ENCODE measurements at regions of chr9 and their contacts with region 1.

Region 1: DNA sequence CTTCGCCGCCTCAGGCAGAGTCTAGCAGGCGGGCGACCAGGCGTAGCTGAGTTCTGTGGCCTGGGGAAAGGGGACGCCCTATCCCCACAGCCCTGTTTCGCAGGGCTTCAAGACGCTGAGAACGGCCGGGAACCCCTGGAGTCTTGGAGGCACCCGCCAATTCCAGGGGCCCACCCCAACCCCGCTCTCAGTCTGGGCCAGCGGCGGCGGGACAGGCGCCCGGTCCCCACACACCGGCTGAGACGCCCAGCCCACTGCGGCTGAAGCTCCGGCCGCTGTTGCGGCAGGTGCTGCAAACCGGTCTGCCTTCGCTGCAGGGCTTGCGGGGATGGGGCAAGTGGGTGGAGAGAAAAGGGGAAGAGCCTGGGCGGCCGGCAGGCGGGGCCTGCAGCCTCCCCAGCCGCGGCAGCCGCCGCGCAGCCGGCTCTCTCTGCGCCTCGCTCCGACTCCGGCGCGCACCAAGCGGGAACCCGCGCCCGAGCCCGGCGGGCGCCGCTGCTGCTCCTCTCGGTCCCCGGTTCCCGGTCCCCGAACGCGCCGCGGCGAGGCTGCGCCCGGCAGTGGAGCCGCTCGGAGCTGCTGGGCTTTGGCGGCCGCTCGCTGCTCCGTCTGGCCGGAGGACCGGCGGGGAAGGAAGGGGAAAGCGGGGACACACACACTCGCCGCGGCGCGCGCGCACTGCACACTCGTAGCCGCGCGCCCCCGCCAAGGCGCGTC is at the start of gene PIP5K1B:
- DNase-seq: peak; percentile 89
- H3K4me3 ChIP-seq: peak within 1 kb of the TSS; percentile 60
- H3K27ac ChIP-seq: peak within 1 kb of the TSS; percentile 88
- H3K4me1 ChIP-seq: no peaks in the 10 kb centered on the region
- H3K27me3 ChIP-seq: no peaks in the 10 kb centered on the region
- CTCF ChIP-seq: no peak
- total RNA-seq, gene PIP5K1B: 59.2 to 74.2 TPM

Region 2: GRCh38 chr9:68779558-68780384 is 74.8 kb after region 1 on chr9:
- intact Hi-C with region 1: loop called (anchors 5 kb)
- DNase-seq: peak; percentile 95
- H3K4me3 ChIP-seq: peak overlapping the region; percentile 74
- H3K27ac ChIP-seq: peak overlapping the region; percentile 91
- H3K4me1 ChIP-seq: peaks cover 9% of the 10 kb centered on the region
- H3K27me3 ChIP-seq: no peaks in the 10 kb centered on the region
- CTCF ChIP-seq: peak; percentile 15

Region 3: DNA sequence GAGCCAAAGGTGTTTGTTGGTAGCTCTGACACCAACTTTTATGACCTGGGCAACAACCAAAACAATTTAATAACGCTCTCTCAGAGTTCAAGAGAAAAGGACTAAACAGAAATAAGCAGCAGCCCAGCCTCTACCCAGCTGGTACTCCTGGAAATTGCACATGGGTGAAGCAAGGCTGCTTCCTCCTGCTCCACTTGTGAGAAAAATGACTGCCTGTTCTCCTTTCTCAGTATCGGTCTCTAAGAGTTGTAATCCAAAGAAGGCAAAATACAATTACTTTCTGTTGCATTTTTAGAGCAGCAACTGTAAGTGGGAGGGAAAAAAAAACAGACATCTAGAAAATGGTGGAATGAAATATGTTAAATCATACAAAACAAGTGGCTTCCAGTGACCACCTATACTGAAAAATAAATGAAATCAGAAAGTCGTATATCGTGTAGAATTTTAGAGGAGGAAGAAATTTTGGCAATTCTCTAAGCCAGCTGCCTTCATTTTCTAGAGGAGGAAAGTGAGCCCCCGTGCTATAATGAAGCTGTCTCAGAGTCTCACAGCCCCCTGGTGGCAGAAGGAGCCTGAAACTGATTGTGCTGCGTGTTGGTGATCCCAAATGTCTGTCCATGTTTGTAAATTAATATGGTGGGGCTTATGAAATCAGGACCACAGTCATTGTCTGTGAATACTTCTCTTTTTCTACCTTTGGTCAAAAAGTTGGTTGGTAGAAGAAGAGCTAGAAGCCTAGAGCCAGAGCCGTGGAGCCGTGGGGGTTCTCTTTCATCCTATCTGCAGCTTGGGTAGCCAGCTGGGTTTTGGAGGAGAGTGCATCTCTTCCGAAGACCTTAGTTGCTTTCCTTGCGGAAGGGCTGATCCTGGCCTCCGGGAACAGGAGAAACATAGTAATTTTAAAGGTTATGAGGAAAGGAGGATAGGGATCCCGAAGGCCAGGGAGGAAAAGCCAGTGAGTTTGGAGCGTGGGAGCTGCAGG is 139.9 kb after region 1 on chr9:
- intact Hi-C with region 1: loop called (anchors 10 kb)
- DNase-seq: peak; percentile 37
- H3K4me3 ChIP-seq: no peak overlapping the region
- H3K27ac ChIP-seq: no peak overlapping the region
- H3K4me1 ChIP-seq: no peaks in the 10 kb centered on the region
- H3K27me3 ChIP-seq: no peaks in the 10 kb centered on the region
- CTCF ChIP-seq: peak; percentile 27

Region 4: GRCh38 chr9:68999393-69000105 is 294.6 kb after region 1 on chr9:
- intact Hi-C with region 1: loop called (anchors 5 kb)
- DNase-seq: peak; percentile 82
- H3K4me3 ChIP-seq: no peak overlapping the region
- H3K27ac ChIP-seq: no peak overlapping the region
- H3K4me1 ChIP-seq: no peaks in the 10 kb centered on the region
- H3K27me3 ChIP-seq: no peaks in the 10 kb centered on the region
- CTCF ChIP-seq: peak; percentile 76